A549 (cell line): ENCODE measurements at regions of chr12 and their contacts with region 1.

Region 1: DNA sequence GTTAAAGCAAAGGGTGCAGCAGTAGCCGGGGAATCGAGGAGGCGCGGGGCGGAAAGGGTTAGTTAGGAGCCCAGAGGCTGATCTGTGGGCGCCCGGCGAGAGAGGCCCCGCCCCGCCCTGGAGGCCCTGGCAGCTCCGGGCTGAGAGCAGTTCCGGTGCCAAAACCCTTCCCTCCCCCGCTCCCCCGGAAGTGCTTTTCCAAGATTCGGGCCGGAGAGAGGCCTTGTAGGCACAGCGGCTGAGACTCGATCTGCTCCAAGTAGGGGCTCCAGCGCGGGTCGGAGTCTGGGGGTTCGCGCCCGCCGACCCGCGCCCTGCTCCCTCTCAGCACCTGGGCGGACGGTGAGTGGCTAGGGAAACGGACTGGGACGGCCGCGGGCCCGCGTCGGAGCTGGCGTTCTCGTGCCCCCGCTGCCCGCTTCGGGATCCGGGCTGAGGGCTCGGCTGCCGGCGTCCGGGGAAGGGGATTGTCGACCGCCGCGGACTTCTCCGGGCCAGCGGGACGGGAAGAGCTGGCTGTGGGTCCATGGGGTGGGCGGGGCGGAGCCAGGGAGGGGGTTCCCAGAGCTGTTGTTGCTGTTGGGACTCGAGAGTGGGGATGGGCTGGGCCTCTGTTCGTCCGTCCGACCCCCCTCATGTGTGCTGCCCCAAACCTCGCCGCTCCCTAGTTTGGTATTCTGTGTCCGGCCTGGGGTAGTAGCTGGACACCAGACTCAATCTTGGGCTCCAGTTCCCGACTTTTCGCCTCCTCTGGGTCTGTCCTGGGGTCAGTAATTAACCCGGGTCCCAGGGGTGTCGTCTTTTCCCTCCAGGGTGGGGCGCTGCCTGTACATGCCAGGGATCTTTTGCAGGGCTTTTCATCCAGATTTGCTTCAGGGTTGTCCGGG is at the start of gene FRS2:
- DNase-seq: peak; percentile 90 to 94
- ATAC-seq: peak; percentile 98 to 99
- H3K4me3 ChIP-seq: peak within 1 kb of the TSS; percentile 92
- H3K27ac ChIP-seq: peak within 1 kb of the TSS; percentile 96 to 97
- H3K4me1 ChIP-seq: peaks cover 50% of the 10 kb centered on the region
- CTCF ChIP-seq: peak; percentile 49
- EP300 ChIP-seq: no peak
- POLR2A ChIP-seq: peak; percentile 69
- RAD21 ChIP-seq: peak; percentile 67 to 81
- polyA plus RNA-seq, gene FRS2: 23.5 and 28.6 TPM in 2 replicates

Region 2: GRCh38 chr12:69052613-69053408 is 417.6 kb before region 1 on chr12:
- CTCF ChIA-PET with region 1: no interaction called
- POLR2A ChIA-PET with region 1: no interaction called
- DNase-seq: peak; percentile 66 to 81
- ATAC-seq: peak; percentile 88 to 95
- H3K4me3 ChIP-seq: no peak overlapping the region
- H3K27ac ChIP-seq: peak overlapping the region; percentile 59 to 83
- H3K4me1 ChIP-seq: peaks cover 17% of the 10 kb centered on the region
- CTCF ChIP-seq: no peak
- EP300 ChIP-seq: peak in 1 of 2 experiments; percentile 16; a peak in 1 of 5 replicates
- POLR2A ChIP-seq: no peak
- RAD21 ChIP-seq: no peak; a peak in 1 of 5 replicates

Region 3: GRCh38 chr12:69388371-69388770 is 82.1 kb before region 1 on chr12:
- CTCF ChIA-PET with region 1: interaction called, 26 read pairs
- POLR2A ChIA-PET with region 1: interaction called, 5 read pairs
- DNase-seq: peak; percentile 11 to 68
- ATAC-seq: peak; percentile 68 to 77; a peak in 5 of 6 replicates
- H3K4me3 ChIP-seq: no peak overlapping the region
- H3K27ac ChIP-seq: peak overlapping the region; percentile 6 to 62; a peak in 3 of 6 replicates
- H3K4me1 ChIP-seq: peaks cover 32% of the 10 kb centered on the region
- CTCF ChIP-seq: peak; percentile 78
- EP300 ChIP-seq: no peak
- POLR2A ChIP-seq: no peak
- RAD21 ChIP-seq: peak; percentile 81 to 83

Region 4: GRCh38 chr12:69484428-69484827 is 14.0 kb after region 1 on chr12:
- CTCF ChIA-PET with region 1: interaction called, 12 read pairs
- POLR2A ChIA-PET with region 1: interaction called, 9 read pairs
- DNase-seq: no peak
- ATAC-seq: peak in 1 of 2 experiments; percentile 38; a peak in 2 of 6 replicates
- H3K4me3 ChIP-seq: no peak overlapping the region
- H3K27ac ChIP-seq: no peak overlapping the region
- H3K4me1 ChIP-seq: peaks cover 13% of the 10 kb centered on the region; the same call in 1 of the 3 replicates
- CTCF ChIP-seq: no peak
- EP300 ChIP-seq: no peak
- POLR2A ChIP-seq: no peak
- RAD21 ChIP-seq: 0 out of 5 replicates have a peak, but pooled peaks of 1 of the 2 experiments have one; percentile 17

Region 5: DNA sequence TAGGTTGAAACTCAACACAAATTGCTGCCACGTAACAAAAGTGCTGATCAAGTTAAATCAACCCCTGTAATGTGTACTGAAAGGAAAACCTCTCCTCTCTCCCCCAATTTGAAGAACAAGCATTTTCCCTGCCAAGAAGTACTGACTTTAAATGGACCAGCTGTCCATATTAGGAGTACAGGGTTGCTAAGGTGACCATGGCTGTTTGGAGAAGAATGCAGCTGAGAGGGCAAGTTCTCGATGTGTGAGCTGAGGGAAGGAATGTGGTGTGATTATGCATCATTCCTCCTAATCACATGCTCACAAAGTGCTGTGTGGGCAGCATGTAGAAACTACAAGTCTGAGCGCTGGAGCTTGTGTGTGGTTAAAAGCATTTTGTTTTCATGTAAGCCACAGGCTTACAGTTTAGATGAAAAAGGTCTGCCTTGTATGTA is 64.0 kb after region 1 on chr12:
- CTCF ChIA-PET with region 1: no interaction called
- POLR2A ChIA-PET with region 1: interaction called, 11 read pairs
- DNase-seq: peak; percentile 30 to 71
- ATAC-seq: peak; percentile 98 to 99
- H3K4me3 ChIP-seq: no peak overlapping the region
- H3K27ac ChIP-seq: peak overlapping the region in 1 of 2 experiments; percentile 10; a peak in 1 of 6 replicates
- H3K4me1 ChIP-seq: peaks cover 10% of the 10 kb centered on the region
- CTCF ChIP-seq: no peak
- EP300 ChIP-seq: no peak
- POLR2A ChIP-seq: no peak
- RAD21 ChIP-seq: no peak